Prostate gland (tissue), 2 donors: ENCODE measurements at regions of chr3 and their contacts with region 1.

Region 1: GRCh38 chr3:196251918-196252317 is 35.6 kb downstream of the SLC51A start:
- DNase-seq: no peak
- H3K4me3 ChIP-seq: no peak overlapping the region
- H3K27ac ChIP-seq: no peak overlapping the region
- H3K4me1 ChIP-seq: no peaks in the 10 kb centered on the region
- H3K27me3 ChIP-seq: no peaks in the 10 kb centered on the region
- CTCF ChIP-seq: no peak
- POLR2A ChIP-seq: no peak

Region 2: DNA sequence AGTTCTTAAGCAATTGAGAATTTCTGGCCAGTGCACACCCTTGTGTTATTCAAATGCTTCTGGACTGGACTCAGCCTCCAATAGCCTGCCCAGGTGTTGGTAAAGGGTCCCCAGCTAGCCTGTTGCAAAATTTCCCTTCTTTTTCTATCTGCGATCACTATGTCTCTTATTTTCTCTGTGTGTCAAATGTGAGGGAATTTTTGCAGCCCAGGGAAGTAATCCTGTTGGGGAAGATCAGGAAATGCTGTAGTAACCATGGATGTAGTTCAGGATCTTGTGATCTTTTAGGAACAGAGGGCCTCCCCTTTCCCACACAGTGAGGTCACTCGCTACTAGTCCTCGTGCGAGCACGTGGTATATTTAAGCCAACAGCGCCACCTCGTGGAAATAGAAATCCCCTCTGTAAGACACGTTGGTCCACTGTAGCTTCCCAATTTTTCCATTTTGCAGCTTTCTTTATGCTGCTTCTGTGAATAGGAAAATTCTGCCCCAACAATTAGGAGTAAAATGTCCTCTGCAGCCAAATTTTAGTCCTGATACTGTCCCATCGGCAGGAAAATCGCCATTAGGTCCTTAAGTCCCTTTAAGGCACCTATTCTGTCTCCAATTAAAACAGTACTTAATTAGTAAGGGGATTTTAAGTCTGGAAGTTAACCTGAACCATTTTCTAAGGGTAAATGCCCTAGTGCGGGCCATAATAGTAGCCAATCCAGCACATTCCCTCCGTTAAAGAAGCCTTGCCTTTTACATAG is 267.2 kb after region 1 on chr3:
- intact Hi-C with region 1: loop called (anchors 2 kb)
- DNase-seq: peak; percentile 45
- H3K4me3 ChIP-seq: no peak overlapping the region
- H3K27ac ChIP-seq: no peak overlapping the region
- H3K4me1 ChIP-seq: no peaks in the 10 kb centered on the region
- H3K27me3 ChIP-seq: no peaks in the 10 kb centered on the region
- CTCF ChIP-seq: peak; percentile 27 to 60 (median 52)
- POLR2A ChIP-seq: no peak

Region 3: DNA sequence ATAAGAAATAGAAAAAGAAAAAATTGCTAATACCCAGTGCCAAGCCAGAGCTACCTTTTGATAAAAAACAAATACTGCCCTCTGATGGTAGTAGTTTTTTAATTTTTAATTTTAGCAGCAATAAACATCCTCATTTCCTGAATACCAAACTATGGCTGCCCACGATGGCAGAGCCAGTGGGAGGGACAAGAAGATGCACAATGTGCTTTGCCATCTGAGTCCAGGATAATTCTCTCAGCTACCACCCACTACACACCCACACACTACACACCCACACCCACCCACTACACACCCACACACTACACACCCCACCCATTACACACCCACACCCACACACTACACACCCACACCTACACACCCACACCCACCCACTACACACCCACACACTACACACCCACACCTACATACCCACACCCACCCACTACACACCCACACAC is 442.3 kb after region 1 on chr3:
- intact Hi-C with region 1: loop called (anchors 5 kb)
- DNase-seq: no peak
- H3K4me3 ChIP-seq: no peak overlapping the region
- H3K27ac ChIP-seq: no peak overlapping the region
- H3K4me1 ChIP-seq: no peaks in the 10 kb centered on the region
- H3K27me3 ChIP-seq: no peaks in the 10 kb centered on the region
- CTCF ChIP-seq: no peak
- POLR2A ChIP-seq: no peak